ENCODE measurements at regions of chr4 and their contacts with region 1.

Region 1: GRCh38 chr4:60805500-60806313 is 394.4 kb upstream of the ADGRL3 start:
- DNase-seq: peak; percentile 78
- ATAC-seq: peak; percentile 81
- H3K4me3 ChIP-seq: no peak overlapping the region
- H3K27ac ChIP-seq: no peak overlapping the region
- H3K4me1 ChIP-seq: no peaks in the 10 kb centered on the region
- H3K27me3 ChIP-seq: no peaks in the 10 kb centered on the region
- CTCF ChIP-seq: peak; percentile 95

Region 2: GRCh38 chr4:61129971-61130370 is 324.3 kb after region 1 on chr4:
- CTCF ChIA-PET with region 1: no interaction called
- POLR2A ChIA-PET with region 1: no interaction called
- intact Hi-C with region 1: loop called (anchors 10 kb)
- DNase-seq: no peak
- ATAC-seq: no peak
- H3K4me3 ChIP-seq: no peak overlapping the region
- H3K27ac ChIP-seq: no peak overlapping the region
- H3K4me1 ChIP-seq: no peaks in the 10 kb centered on the region
- H3K27me3 ChIP-seq: no peaks in the 10 kb centered on the region
- CTCF ChIP-seq: no peak

Region 3: GRCh38 chr4:61500883-61501282 is 695.2 kb after region 1 on chr4:
- CTCF ChIA-PET with region 1: interaction called, 3 read pairs
- POLR2A ChIA-PET with region 1: no interaction called
- intact Hi-C with region 1: loop called (anchors 5 kb)
- DNase-seq: peak; percentile 67
- ATAC-seq: peak; percentile 84
- H3K4me3 ChIP-seq: no peak overlapping the region
- H3K27ac ChIP-seq: no peak overlapping the region
- H3K4me1 ChIP-seq: peaks cover 7% of the 10 kb centered on the region; the same call in 1 of the 2 replicates
- H3K27me3 ChIP-seq: no peaks in the 10 kb centered on the region
- CTCF ChIP-seq: peak; percentile 78